ENCODE measurements at regions of chr17 and their contacts with region 1.

Region 1: GRCh38 chr17:81484195-81484979 is 28.2 kb downstream of the ACTG1 start:
- DNase-seq: peak; percentile 93
- ATAC-seq: peak; percentile 65
- H3K4me3 ChIP-seq: peak overlapping the region in 4 of 5 experiments; percentile 21 to 66 (median 48)
- H3K4me3 Mint-ChIP-seq: peak overlapping the region; percentile 57
- H3K27ac ChIP-seq: no peak overlapping the region
- H3K27ac Mint-ChIP-seq: no peak overlapping the region
- H3K4me1 ChIP-seq: peaks cover 46 to 53% of the 10 kb centered on the region in 2 donors
- H3K4me1 Mint-ChIP-seq: peaks cover 26% of the 10 kb centered on the region
- H3K27me3 ChIP-seq: peaks cover 0 to 28% (median 12%) of the 10 kb centered on the region in 4 experiments
- H3K27me3 Mint-ChIP-seq: peaks cover 13% of the 10 kb centered on the region
- CTCF ChIP-seq: peak; percentile 99

Region 2: GRCh38 chr17:81142301-81143199 is 341.8 kb before region 1 on chr17:
- CTCF ChIA-PET with region 1: interaction called, 22 read pairs
- POLR2A ChIA-PET with region 1: no interaction called
- intact Hi-C with region 1: no loop called
- DNase-seq: peak; percentile 79
- ATAC-seq: peak; percentile 73
- H3K4me3 ChIP-seq: no peak overlapping the region
- H3K4me3 Mint-ChIP-seq: no peak overlapping the region
- H3K27ac ChIP-seq: no peak overlapping the region
- H3K27ac Mint-ChIP-seq: no peak overlapping the region
- H3K4me1 ChIP-seq: no peaks in the 10 kb centered on the region
- H3K4me1 Mint-ChIP-seq: peaks cover 2% of the 10 kb centered on the region
- H3K27me3 ChIP-seq: peaks cover 0 to 4% (median 0%) of the 10 kb centered on the region in 4 experiments
- H3K27me3 Mint-ChIP-seq: peaks cover 3% of the 10 kb centered on the region
- CTCF ChIP-seq: peak; percentile 73

Region 3: GRCh38 chr17:81253358-81254131 is 230.8 kb before region 1 on chr17:
- CTCF ChIA-PET with region 1: interaction called, 44 read pairs
- POLR2A ChIA-PET with region 1: no interaction called
- intact Hi-C with region 1: no loop called
- DNase-seq: peak; percentile 77
- ATAC-seq: peak; percentile 83
- H3K4me3 ChIP-seq: no peak overlapping the region
- H3K4me3 Mint-ChIP-seq: no peak overlapping the region
- H3K27ac ChIP-seq: no peak overlapping the region
- H3K27ac Mint-ChIP-seq: peak overlapping the region; percentile 17
- H3K4me1 ChIP-seq: peaks cover 0 to 11% of the 10 kb centered on the region in 2 donors
- H3K4me1 Mint-ChIP-seq: peaks cover 7% of the 10 kb centered on the region
- H3K27me3 ChIP-seq: no peaks in the 10 kb centered on the region
- H3K27me3 Mint-ChIP-seq: no peaks in the 10 kb centered on the region
- CTCF ChIP-seq: peak; percentile 83

Region 4: GRCh38 chr17:81346090-81346907 is 138.1 kb before region 1 on chr17:
- CTCF ChIA-PET with region 1: no interaction called
- POLR2A ChIA-PET with region 1: no interaction called
- intact Hi-C with region 1: loop called (anchors 1 kb)
- DNase-seq: peak; percentile 93
- ATAC-seq: peak; percentile 94
- H3K4me3 ChIP-seq: peak overlapping the region in 4 of 5 experiments; percentile 41 to 61 (median 54)
- H3K4me3 Mint-ChIP-seq: peak overlapping the region; percentile 69
- H3K27ac ChIP-seq: no peak overlapping the region
- H3K27ac Mint-ChIP-seq: no peak overlapping the region
- H3K4me1 ChIP-seq: peaks cover 34 to 36% of the 10 kb centered on the region in 2 donors
- H3K4me1 Mint-ChIP-seq: peaks cover 21% of the 10 kb centered on the region
- H3K27me3 ChIP-seq: peaks cover 0 to 53% (median 32%) of the 10 kb centered on the region in 4 experiments
- H3K27me3 Mint-ChIP-seq: peaks cover 32% of the 10 kb centered on the region
- CTCF ChIP-seq: no peak

Region 5: GRCh38 chr17:81500047-81500446 is 15.7 kb after region 1 on chr17:
- CTCF ChIA-PET with region 1: interaction called, 15 read pairs
- POLR2A ChIA-PET with region 1: interaction called, 6 read pairs
- intact Hi-C with region 1: no loop called
- DNase-seq: no peak
- ATAC-seq: no peak
- H3K4me3 ChIP-seq: no peak overlapping the region
- H3K4me3 Mint-ChIP-seq: no peak overlapping the region
- H3K27ac ChIP-seq: no peak overlapping the region
- H3K27ac Mint-ChIP-seq: no peak overlapping the region
- H3K4me1 ChIP-seq: no peaks in the 10 kb centered on the region
- H3K4me1 Mint-ChIP-seq: no peaks in the 10 kb centered on the region
- H3K27me3 ChIP-seq: peaks cover 0 to 7% (median under 1%) of the 10 kb centered on the region in 4 experiments
- H3K27me3 Mint-ChIP-seq: no peaks in the 10 kb centered on the region
- CTCF ChIP-seq: no peak

Region 6: DNA sequence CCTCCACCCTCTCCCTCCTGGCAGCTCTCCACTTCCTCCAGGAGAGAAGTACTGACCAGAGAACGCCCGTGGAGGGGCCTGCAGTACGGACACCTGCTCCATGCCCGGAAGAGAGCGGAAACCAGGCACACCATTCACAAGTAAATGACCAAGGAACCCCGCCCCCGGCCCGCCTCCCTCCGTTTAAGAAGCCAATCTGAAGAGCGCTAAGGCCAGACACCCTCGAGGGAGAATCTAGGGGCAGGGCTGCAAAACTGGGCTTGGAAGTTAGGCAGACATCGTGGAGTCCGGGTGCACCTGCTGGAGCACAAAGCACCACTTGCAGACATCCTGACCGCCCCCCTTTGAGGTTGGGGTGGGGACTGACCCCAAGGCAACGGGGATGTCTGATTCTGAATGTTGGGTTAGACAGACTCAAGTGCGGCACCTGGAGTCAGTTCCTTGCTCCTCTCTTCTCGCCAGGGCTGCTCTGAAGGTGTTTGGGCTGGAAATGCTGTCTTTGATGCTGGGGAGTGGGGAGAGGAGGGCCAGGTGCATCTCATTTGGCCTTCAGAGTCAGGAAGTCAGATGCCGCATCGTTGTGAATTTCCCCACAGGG is 68.7 kb after region 1 on chr17:
- CTCF ChIA-PET with region 1: interaction called, 4 read pairs
- POLR2A ChIA-PET with region 1: interaction called, 4 read pairs
- intact Hi-C with region 1: loop called (anchors 1 kb)
- DNase-seq: peak; percentile 92
- ATAC-seq: peak; percentile 64
- H3K4me3 ChIP-seq: peak overlapping the region; percentile 63 to 97 (median 91)
- H3K4me3 Mint-ChIP-seq: peak overlapping the region; percentile 92
- H3K27ac ChIP-seq: peak overlapping the region; percentile 66 to 86
- H3K27ac Mint-ChIP-seq: peak overlapping the region; percentile 93
- H3K4me1 ChIP-seq: peaks cover 18 to 23% of the 10 kb centered on the region in 2 donors
- H3K4me1 Mint-ChIP-seq: peaks cover 31% of the 10 kb centered on the region
- H3K27me3 ChIP-seq: no peaks in the 10 kb centered on the region
- H3K27me3 Mint-ChIP-seq: no peaks in the 10 kb centered on the region
- CTCF ChIP-seq: no peak

Region 7: DNA sequence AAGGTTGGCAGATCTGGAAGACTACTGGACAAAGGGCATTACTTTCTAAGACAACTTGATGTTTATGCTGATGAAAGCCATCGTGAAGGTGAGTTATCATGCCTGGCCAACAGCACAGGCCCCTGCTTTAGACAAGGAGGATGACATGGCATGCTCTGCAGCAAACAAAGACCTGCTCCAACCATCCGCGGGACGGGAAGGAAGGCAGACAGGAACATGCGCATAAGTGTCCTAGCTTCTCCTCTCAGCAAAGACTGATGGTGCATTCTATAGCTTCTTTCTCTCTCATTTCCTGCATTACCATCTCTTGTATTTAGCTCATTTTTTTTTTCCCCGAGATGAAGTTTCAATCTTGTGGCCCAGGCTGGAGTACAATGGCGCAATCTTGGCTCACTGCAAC is 147.1 kb after region 1 on chr17:
- CTCF ChIA-PET with region 1: no interaction called
- POLR2A ChIA-PET with region 1: no interaction called
- intact Hi-C with region 1: no loop called
- DNase-seq: no peak
- ATAC-seq: no peak
- H3K4me3 ChIP-seq: no peak overlapping the region
- H3K4me3 Mint-ChIP-seq: no peak overlapping the region
- H3K27ac ChIP-seq: no peak overlapping the region
- H3K27ac Mint-ChIP-seq: no peak overlapping the region
- H3K4me1 ChIP-seq: peaks cover 11 to 21% of the 10 kb centered on the region in 2 donors
- H3K4me1 Mint-ChIP-seq: peaks cover 20% of the 10 kb centered on the region
- H3K27me3 ChIP-seq: no peaks in the 10 kb centered on the region
- H3K27me3 Mint-ChIP-seq: no peaks in the 10 kb centered on the region
- CTCF ChIP-seq: no peak

Measured in B cell (primary cell).